Mammary epithelial cell (primary cell): ENCODE measurements at regions of chr9 and their contacts with region 1.

Region 1: GRCh38 chr9:69421908-69422801 is 97.1 kb downstream of the ENTREP1 start:
- DNase-seq: peak; percentile 47
- H3K4me3 ChIP-seq: no peak overlapping the region
- H3K27ac ChIP-seq: no peak overlapping the region
- H3K4me1 ChIP-seq: no peaks in the 10 kb centered on the region
- H3K27me3 ChIP-seq: peaks cover 4% of the 10 kb centered on the region
- CTCF ChIP-seq: peak; percentile 61 to 74

Region 2: GRCh38 chr9:69672596-69673310 is 250.6 kb after region 1 on chr9:
- CTCF ChIA-PET with region 1: no interaction called
- dilution Hi-C with region 1: no loop called
- in situ Hi-C with region 1: no loop called
- intact Hi-C with region 1: loop called (anchors 5 kb)
- DNase-seq: peak; percentile 79
- H3K4me3 ChIP-seq: peak overlapping the region; percentile 47 to 71 (median 69)
- H3K27ac ChIP-seq: no peak overlapping the region
- H3K4me1 ChIP-seq: peaks cover 33% of the 10 kb centered on the region
- H3K27me3 ChIP-seq: no peaks in the 10 kb centered on the region
- CTCF ChIP-seq: peak; percentile 70 to 85

Region 3: DNA sequence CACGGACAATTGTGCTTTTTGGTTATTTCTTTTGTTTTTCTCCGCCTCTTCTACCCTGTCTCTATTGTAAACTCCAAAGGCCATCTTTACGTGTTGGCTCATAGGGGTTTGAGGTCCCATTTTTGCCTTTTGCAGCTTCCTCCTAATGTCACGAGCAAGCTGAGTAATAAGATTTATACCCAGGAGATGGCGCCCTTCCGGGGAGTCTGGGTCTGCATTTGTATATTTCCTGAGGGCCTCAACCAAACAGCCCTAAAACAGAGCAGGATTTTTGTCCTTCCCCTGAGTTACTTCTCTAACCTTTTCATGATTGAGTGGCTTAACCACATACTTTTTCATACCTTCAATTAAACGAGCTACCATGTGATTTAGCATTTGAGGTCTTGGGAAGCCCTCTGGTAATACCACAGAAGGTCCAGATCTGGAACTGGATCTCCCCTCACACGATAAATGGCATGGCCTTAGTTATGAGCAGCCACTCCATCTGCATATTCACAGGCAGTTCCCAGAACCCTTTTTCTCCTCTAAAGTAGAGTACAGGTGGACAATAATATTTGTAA is 387.2 kb after region 1 on chr9:
- CTCF ChIA-PET with region 1: no interaction called
- dilution Hi-C with region 1: loop called (anchors 25 kb)
- in situ Hi-C with region 1: no loop called
- intact Hi-C with region 1: no loop called
- DNase-seq: peak; percentile 17
- H3K4me3 ChIP-seq: no peak overlapping the region
- H3K27ac ChIP-seq: no peak overlapping the region
- H3K4me1 ChIP-seq: no peaks in the 10 kb centered on the region
- H3K27me3 ChIP-seq: no peaks in the 10 kb centered on the region
- CTCF ChIP-seq: peak; percentile 38 to 41

Region 4: DNA sequence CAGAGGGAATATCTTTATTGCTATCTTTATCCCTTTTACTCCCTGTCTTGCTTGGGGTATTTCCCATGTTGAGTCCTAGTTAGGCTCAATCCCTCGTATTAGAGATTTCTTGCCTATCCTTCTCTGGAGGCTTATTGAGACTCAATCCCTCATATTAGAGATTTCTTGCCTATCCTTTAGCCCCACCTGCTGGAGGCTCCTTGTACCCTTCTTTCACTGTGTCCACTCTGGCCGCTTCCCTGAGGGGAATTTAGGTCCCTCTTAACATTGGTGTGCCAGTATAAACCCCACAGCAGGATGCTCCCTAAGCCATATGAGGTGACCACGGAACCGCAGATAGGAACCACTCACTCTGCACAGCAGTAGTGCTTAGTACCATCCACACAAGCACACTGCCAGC is 510.7 kb after region 1 on chr9:
- CTCF ChIA-PET with region 1: no interaction called
- dilution Hi-C with region 1: loop called (anchors 10 kb)
- in situ Hi-C with region 1: no loop called
- intact Hi-C with region 1: loop called (anchors 2 kb)
- DNase-seq: no peak
- H3K4me3 ChIP-seq: no peak overlapping the region
- H3K27ac ChIP-seq: no peak overlapping the region
- H3K4me1 ChIP-seq: peaks cover 10% of the 10 kb centered on the region
- H3K27me3 ChIP-seq: no peaks in the 10 kb centered on the region
- CTCF ChIP-seq: peak; percentile 35 to 50